Right cardiac atrium (tissue), 5 donors: ENCODE measurements at regions of chr2 and their contacts with region 1.

Region 1: DNA sequence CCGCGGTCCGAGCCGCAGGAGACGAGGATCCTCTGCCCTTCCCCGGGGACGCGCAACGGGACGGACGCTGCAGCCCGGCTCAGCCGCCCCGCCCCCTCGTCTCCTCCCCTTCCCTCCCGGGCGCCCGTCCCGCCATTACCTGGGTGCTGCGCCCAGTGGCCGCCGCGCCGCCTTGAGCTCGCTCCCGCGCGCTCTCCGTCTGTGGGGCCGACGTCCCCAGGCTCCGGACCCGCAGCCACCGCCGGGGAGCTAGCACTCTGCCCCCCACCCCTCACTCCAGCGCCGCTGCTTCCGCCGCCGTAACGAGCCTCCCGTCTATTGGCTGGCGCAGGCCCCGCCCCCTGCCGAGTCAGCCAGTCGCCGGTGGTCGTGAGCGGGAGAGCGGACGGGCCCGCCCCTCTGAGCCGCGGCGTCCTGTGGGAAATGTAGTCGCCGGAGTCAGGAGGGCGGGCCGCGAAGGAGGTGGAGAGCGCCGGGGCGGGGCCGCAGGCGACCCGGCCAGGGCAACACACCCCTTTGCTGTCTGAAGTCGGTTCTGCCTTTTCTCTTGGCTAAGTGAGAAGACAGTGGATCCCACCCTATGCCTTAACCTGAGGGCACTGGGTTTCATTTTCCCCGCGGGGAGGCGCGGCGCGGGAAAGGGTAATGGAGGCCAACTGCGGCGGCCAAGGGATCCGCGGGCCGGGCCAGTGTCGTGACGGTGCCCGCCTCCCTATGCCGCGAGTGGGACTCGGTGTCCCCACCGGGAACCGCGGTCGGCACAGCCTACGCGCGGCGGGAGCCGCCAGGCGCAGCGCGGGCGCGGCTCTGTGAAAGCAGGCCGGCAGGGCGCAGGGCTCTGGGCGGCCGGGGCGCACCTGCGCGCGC is at the start of gene SAP130:
- DNase-seq: peak; percentile 99 to 100 (median 100)
- ATAC-seq: peak; percentile 96
- H3K4me3 ChIP-seq: peak within 1 kb of the TSS; percentile 87
- H3K27ac ChIP-seq: peak within 1 kb of the TSS; percentile 97
- H3K4me1 ChIP-seq: no peaks in the 10 kb centered on the region
- H3K27me3 ChIP-seq: no peaks in the 10 kb centered on the region
- total RNA-seq, gene SAP130: 11.8 to 15.0 (median 12.6) TPM

Region 2: DNA sequence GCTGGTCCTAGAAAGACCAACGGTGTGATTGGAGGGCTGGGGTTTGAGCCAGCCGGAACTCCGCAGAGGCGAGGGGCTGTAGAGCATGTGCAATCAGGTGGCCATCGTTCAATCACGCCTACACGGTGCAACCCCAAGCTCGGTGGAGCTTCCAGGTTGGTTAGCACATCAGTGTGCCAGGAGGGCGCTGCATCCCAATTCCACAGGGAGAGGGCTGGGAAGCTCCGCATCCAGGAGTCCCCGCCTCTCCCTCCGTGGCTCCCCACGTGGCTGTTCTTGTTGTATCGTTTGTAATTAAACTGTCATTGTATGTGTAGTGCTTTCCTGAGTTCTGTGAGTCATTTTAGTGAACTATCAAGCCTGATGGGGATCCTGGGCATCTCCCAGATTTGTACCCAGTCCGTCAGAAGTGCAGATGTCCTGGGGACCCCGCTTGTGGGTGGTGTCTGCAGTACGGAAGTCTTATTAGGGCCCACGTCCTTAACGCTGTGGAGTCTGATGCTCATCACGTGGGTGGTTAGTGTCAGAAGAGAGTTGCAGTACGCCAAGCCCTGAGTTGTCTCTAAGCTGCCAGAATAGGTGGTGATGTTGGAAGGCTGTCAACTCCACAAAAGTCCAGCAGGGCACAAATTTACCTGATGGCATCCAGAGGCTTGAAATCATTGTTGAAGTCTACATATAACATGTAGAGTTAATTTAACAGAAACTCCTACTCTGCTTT is 121.7 kb before region 1 on chr2:
- intact Hi-C with region 1: no loop called
- DNase-seq: peak in 1 of 3 donors; percentile 3
- ATAC-seq: no peak
- H3K4me3 ChIP-seq: no peak overlapping the region
- H3K27ac ChIP-seq: no peak overlapping the region
- H3K4me1 ChIP-seq: peaks cover 2% of the 10 kb centered on the region
- H3K27me3 ChIP-seq: no peaks in the 10 kb centered on the region

Region 3: DNA sequence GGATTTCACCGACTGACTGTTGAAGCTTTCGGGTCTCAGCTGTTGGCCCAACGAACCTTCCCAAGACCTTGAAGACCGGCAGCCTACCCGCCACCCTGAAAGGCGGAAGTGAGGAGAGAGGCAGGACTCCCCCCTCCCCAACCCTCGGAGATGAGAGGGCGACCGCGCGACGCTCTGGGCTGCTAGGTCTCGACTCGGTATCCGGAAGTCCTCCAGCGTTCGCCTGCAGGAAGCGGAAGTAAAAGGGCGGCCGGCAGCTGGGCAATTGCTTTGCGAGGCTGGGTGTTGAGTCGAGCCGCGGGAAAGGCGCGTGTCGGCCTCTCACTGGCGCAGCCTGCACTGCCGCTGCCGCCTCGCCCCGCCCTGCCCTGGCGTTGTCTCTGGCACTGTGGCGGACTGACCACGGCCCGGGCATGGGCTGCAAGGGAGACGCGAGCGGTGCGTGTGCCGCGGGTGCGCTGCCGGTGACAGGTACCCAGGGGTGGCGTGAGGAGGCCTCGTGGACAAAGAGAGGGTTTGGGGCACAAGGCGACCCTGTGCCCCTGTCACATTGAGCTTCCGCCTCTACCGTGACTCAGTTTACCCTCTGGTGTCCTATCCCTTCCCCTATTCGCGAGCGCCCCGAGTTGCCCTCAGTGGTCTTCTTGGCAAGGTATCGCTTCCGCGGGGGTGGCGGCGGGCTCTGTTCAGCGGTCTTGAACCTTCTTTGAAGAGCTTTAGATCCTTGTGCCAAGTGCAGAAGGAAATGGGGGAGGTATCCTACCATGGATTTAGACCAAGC is 63.1 kb after region 1 on chr2 and contains the start of gene UGGT1:
- intact Hi-C with region 1: loop called in 1 of 4 experiments (anchors 5 kb)
- DNase-seq: peak; percentile 96 to 97 (median 97)
- ATAC-seq: peak; percentile 99 to 100
- H3K4me3 ChIP-seq: peak within 1 kb of the TSS; percentile 64
- H3K27ac ChIP-seq: peak within 1 kb of the TSS; percentile 81
- H3K4me1 ChIP-seq: peaks cover 1% of the 10 kb centered on the region
- H3K27me3 ChIP-seq: no peaks in the 10 kb centered on the region
- total RNA-seq, gene UGGT1: 25.0 to 35.7 (median 34.7) TPM